ENCODE measurements at regions of chr1 and their contacts with region 1.

Region 1: DNA sequence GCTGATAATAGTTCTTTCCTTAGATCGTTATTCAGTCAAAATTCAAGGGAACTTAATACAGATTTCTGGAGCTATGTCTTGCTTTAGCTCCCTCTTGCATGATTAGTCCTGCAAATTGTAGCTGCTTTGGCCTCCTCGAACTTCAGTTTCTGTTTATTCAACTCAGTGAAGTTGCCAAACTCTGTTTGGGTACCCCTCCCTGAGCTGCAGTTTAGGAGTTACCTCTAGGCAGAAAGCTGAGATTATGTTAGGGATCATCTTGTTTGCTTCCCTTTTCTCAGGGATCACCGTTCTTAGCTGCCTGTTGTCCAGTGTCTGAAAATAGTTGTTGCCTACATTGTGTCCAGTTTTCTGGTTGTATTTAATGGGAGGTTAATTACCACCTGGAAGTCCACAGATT is 43.5 kb downstream of the SNX27 start:
- DNase-seq: no peak
- ATAC-seq: no peak
- H3K4me3 ChIP-seq: no peak overlapping the region
- H3K4me3 Mint-ChIP-seq: no peak overlapping the region
- H3K27ac ChIP-seq: no peak overlapping the region
- H3K27ac Mint-ChIP-seq: no peak overlapping the region
- H3K4me1 ChIP-seq: peaks cover 13% of the 10 kb centered on the region
- H3K4me1 Mint-ChIP-seq: peaks cover 14% of the 10 kb centered on the region
- H3K27me3 ChIP-seq: no peaks in the 10 kb centered on the region
- H3K27me3 Mint-ChIP-seq: no peaks in the 10 kb centered on the region
- CTCF ChIP-seq: no peak

Region 2: DNA sequence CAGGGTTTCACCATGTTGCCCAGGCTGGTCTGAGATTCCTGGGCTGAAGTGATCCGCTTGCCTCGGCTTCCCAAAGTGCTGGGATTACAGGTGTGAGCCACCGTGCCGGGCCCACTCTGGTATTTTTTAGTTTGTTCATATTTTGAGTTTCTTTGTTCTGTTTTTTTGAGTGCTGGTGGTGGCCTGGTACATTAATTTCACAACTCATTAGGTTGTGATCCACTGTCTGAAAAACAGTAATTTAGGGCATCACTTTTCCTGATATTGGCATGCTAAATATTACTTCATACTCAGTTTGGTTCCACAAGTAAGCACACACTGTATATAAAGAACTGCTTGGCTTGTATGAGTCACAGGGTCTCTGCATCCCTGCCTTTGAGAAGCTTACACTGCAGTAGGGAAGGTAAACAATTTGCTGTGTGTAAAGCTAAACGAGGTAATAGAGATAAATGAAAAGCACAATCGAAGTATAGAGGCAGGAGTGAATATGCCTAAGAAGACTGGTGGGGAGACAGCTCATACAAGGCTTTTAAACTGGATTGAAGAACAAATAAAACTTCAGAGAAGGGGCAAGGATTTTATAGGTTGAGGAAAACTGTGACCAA is 35.8 kb before region 1 on chr1:
- CTCF ChIA-PET with region 1: no interaction called
- POLR2A ChIA-PET with region 1: no interaction called
- intact Hi-C with region 1: loop called in 1 of 2 experiments (anchors 5 kb)
- DNase-seq: no peak
- ATAC-seq: no peak
- H3K4me3 ChIP-seq: no peak overlapping the region
- H3K4me3 Mint-ChIP-seq: no peak overlapping the region
- H3K27ac ChIP-seq: no peak overlapping the region
- H3K27ac Mint-ChIP-seq: peak overlapping the region; percentile 11
- H3K4me1 ChIP-seq: peaks cover 11% of the 10 kb centered on the region
- H3K4me1 Mint-ChIP-seq: peaks cover 58% of the 10 kb centered on the region
- H3K27me3 ChIP-seq: no peaks in the 10 kb centered on the region
- H3K27me3 Mint-ChIP-seq: no peaks in the 10 kb centered on the region
- CTCF ChIP-seq: no peak